GM10248 (cell line): ENCODE measurements at regions of chr12 and their contacts with region 1.

Region 1: DNA sequence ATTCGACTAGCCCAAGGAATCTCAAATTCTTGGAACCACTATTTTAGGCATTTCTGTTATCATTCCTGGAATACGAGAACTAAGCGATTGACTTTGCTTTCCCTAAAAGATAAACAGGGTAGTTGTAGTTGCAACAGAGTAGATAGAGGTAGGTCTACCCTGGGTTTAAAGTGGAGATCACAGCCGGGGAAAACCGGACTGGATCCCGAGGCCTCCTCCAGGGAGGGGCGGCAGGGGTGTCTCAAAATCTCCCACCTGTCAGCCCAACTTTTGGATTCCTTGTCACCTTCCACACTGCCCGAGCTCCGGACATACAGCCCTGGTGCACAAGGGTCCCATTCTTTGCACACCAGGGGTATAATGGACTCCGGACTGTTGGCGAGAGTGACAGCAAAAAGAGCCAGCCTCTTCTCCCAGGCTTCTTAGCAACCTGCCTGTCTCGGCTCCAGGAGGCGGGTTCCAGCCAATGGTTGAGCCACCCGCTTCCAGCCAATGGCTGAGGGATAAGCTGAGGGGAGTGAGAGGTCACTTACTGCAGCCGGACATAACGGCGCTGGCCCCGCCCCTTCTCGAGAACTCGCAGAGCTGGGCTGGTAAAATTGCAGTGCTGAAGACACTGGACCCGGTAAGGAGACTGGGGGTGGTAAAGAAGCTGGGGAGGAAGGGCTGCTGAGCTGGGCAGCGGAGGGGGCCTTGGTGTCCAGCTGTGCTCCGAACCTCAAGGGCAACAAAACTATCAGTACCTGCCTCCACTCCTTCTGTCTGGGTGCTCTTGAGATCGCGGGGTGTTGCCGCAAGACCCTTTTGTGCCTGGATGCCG is at the start of gene SUOX:
- DNase-seq: peak; percentile 98
- CTCF ChIP-seq: no peak

Region 2: DNA sequence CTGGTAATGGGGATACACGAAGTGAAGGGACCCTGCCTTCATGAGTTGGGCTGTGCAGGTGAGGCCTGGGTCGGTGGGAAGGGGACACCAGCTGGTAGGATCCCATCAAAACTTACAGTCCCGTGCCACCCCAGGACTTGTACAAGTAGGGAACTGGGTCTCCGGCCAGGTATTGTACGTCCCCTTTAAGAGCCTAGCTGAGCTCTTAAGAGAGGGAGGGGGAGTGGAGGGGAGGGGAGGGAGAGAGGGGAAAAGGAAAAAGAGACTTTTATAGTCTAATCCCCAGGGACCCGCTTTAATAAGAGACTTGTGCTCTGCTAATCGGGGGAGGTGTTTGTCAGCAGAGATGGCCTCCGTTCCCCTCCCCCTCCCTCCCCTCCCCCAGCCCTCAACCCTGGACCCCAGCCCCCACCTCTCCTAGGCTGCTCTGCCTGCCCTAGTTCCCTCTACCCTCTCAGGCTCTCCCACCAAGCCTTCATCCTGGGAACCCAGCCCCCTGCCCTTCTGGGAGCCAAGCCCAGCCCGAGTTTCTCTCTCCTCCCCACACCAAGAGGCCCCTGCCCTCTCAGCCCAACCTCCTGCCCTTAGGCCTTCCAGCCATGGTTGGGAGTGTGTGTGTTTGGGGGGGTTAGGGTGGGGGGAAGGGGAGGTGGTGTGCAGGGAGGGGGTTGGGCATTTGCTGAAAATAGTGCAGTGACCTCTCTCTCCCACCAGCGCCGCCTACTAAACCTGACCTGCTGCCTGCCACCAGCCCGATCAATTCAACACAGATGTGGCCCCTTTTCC is 251.4 kb before region 1 on chr12:
- CTCF ChIA-PET with region 1: interaction called, 19 read pairs
- POLR2A ChIA-PET with region 1: no interaction called
- DNase-seq: no peak
- CTCF ChIP-seq: no peak

Region 3: DNA sequence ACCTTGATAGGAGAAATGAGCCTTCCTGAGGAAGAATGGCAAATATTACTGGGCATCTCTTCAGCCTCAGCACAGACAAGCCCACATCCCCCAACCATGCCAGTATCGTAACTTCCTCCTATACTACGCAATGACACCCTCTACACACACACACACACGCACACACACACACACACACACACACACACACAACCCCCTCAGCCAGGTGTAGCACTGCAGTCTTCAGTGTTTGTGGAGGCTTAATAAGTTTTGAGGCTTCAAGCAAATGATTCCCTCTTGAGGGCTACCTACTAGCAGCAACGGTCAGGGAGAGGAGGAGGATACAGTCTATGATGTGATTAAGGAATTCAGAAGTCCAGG is 64.4 kb before region 1 on chr12:
- CTCF ChIA-PET with region 1: interaction called, 28 read pairs
- POLR2A ChIA-PET with region 1: no interaction called
- DNase-seq: peak; percentile 35
- CTCF ChIP-seq: no peak

Region 4: DNA sequence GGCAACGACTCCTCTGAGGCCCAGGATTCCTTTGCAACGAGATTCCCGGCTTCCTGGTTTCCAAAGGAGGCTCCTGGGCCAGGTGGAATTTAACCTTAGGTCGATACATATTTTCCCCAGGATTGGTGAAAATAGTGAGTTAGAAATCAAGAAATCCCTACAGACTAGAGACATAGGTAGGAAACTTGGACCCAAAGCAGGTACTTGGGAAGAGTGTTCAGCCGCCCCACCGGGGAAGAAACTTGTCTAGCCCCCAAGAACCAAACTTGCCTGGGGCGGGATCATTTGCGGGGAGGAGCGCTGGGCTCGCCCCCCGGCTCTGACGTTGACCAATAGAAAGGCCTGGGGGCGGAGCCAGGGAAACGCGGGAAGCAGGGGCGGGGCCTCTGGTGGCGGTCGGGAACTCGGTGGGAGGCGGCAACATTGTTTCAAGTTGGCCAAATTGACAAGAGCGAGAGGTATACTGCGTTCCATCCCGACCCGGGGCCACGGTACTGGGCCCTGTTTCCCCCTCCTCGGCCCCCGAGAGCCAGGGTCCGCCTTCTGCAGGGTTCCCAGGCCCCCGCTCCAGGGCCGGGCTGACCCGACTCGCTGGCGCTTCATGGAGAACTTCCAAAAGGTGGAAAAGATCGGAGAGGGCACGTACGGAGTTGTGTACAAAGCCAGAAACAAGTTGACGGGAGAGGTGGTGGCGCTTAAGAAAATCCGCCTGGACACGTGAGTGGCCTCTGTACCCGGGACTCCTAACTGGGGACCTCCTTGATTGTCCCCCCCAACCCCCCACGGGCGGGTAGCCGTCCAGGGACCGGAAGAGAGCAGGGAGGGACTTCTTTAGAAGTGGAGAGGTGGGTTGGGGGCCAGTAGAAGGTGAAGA is 30.3 kb before region 1 on chr12 and contains the start of gene CDK2:
- CTCF ChIA-PET with region 1: interaction called, 21 read pairs
- POLR2A ChIA-PET with region 1: no interaction called
- DNase-seq: peak; percentile 94
- CTCF ChIP-seq: no peak

Region 5: GRCh38 chr12:55982319-55982936 is 14.5 kb before region 1 on chr12:
- CTCF ChIA-PET with region 1: interaction called, 140 read pairs
- POLR2A ChIA-PET with region 1: interaction called, 5 read pairs
- DNase-seq: peak; percentile 69
- CTCF ChIP-seq: no peak

Region 6: GRCh38 chr12:56020423-56021184 is 23.7 kb after region 1 on chr12 and contains the start of gene IKZF4:
- CTCF ChIA-PET with region 1: interaction called, 114 read pairs
- POLR2A ChIA-PET with region 1: no interaction called
- DNase-seq: peak; percentile 29
- CTCF ChIP-seq: no peak

Region 7: GRCh38 chr12:56041552-56042429 is 44.9 kb after region 1 on chr12 and contains the start of gene RPS26:
- CTCF ChIA-PET with region 1: interaction called, 31 read pairs
- POLR2A ChIA-PET with region 1: interaction called, 5 read pairs
- DNase-seq: peak; percentile 90
- CTCF ChIP-seq: peak; percentile 67